ENCODE measurements at regions of chr10 and their contacts with region 1.

Region 1: DNA sequence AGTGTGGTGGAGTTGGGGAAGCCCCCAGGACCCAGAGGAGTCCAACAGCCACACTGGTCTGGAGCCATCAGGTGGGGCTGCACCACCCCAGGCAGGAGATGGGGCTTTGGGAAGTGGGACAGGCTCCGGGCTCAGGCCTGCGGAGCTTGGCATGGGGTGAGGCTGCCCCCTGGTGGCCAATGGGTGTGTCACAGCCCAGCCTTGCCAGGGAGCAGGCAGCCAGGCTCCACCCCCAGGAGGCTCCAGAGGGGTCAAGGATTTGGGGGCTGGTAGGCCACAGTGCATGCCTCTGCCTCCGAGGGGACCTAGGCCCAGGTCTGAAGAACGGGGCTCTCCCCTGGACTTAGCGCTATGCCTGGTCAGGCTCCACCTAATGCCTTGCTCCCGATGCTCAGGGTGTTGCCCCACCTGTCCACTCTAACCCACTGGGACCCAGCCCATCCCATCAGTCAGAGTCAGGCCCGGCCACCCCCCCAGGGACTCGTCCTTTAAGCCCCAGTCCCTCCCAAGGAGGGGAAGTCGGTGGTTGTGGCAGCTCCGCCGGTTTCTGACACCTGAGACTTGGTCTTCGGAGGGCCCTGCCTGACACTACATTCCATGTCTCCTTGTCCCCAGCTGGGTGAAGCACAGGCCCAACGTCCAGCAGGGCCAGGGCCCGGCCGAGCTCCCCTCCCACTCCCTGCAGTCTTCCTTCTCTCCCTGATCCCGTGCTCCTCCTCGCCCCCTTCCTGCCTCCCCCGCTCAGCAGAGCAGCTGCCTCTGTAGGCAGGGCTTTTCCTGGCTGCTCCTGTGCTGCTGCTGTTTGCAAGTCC is 11.3 kb upstream of the SAMD8 start:
- DNase-seq: peak; percentile 90
- CTCF ChIP-seq: peak; percentile 99

Region 2: DNA sequence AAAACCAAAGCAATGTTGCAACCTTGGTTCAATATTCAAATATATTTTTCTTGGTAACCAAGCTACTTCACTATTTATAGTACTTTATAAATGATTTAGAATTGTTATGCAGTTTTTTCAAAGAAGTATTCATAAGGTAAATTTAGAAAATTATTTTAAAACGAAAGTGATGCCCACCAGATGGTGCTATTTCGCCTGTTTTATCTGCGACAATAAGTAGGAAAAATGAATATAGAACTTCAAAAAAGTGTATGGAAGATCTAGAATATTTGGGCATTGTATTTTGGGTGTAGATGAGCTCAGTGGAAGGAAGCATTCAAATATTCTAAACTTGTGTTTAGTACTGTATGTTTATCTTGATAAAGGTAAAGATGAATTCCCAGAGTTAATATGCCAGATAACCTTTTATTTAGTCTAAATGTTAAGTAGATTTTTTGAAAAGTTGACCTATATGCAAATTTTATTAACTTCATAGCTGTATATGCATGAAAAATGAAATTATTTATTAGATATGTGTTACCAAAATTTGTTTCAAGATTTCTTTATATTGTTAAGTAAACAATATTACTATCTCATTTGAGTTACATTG is 856.0 kb before region 1 on chr10:
- CTCF ChIA-PET with region 1: interaction called, 53 read pairs
- POLR2A ChIA-PET with region 1: no interaction called
- DNase-seq: no peak
- CTCF ChIP-seq: peak; percentile 30

Region 3: GRCh38 chr10:74332398-74332797 is 767.8 kb before region 1 on chr10:
- CTCF ChIA-PET with region 1: no interaction called
- POLR2A ChIA-PET with region 1: no interaction called
- DNase-seq: no peak
- CTCF ChIP-seq: no peak

Region 4: DNA sequence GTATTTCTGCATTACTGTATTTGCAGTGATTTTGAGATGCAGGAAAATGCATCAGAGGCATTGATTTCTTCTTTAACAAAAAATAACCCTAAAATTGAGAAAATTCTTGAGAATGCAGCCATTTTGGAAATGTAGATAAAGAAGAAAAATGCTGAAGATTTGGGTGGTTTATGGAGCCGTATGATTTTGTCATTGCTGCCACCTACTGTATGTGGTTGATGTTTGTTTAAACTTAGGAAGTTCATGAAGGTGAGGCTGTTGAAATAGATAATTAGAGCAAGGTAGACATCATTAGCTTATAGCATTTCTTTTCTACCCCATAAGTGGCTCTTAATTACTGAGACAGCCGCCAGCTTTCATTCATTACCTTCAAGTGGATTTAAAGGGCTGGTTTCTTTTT is 80.8 kb before region 1 on chr10:
- CTCF ChIA-PET with region 1: interaction called, 11 read pairs
- POLR2A ChIA-PET with region 1: no interaction called
- DNase-seq: no peak
- CTCF ChIP-seq: peak; percentile 37

Region 5: DNA sequence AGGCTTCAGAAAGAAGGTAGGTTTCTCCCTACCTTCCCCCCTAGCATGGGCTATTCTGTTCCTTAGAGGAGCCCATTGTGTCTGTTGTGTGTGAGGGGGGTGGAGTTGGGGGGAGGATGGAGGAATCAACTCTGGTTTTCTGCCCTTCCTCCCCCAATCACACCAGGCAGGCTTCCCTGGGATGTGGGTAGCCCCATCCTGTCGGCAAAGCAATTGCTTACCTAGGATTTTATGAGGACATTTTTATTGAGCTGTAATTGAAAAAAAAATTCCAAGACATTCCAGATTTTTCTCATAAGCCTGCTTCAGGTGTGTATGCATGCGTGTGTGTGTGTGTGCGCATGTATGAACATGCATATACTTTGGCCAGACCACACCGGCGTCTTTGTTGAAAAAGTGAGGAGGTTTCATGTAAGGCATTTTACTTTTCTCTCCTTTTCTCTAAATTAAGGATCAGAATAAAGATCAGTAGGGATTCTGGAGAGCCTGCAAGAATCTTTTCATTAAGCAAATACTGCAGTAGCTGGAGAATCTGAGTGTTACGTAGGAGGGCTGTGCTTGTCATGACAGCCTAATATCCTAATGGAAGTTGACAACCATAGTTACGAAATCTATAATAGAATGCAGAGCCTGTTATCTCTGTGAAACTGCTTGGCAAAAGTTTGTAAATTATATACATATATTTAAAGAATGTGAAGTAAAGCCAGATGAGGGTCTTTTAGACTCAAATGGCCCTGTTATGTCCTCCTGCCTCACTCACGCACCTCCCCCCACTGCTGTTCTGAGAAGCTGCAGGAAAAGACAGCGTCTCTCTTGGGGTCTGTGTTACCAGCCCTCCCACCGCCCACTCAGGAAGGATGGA is 16.0 kb before region 1 on chr10:
- CTCF ChIA-PET with region 1: interaction called, 14 read pairs
- POLR2A ChIA-PET with region 1: no interaction called
- DNase-seq: no peak
- CTCF ChIP-seq: no peak

Region 6: GRCh38 chr10:75111367-75111906 is 11.3 kb after region 1 on chr10 and contains the start of gene SAMD8:
- CTCF ChIA-PET with region 1: interaction called, 22 read pairs
- POLR2A ChIA-PET with region 1: no interaction called
- DNase-seq: peak; percentile 100
- CTCF ChIP-seq: peak; percentile 0

Region 7: GRCh38 chr10:75202321-75203045 is 102.3 kb after region 1 on chr10:
- CTCF ChIA-PET with region 1: no interaction called
- POLR2A ChIA-PET with region 1: no interaction called
- DNase-seq: no peak
- CTCF ChIP-seq: no peak

Region 8: DNA sequence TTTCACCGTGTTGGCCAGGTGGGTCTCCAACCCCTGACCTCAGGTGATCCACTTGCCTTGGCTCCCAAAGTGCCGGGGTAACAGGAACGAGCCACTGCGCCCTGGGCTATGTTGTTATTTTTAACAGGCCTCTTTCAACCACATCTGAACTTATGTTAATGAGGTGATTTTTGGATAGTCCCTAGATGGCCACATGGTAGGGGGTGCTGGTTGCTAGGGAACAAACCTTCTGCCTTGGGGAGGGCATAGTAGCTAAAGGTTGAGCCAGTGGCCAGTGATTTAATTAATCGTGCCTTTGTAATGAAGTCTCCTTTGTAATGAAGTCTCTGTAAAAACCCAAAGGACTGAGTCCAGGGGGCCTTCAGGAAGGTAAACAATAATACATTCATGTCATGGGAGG is 126.5 kb after region 1 on chr10:
- CTCF ChIA-PET with region 1: no interaction called
- POLR2A ChIA-PET with region 1: no interaction called
- DNase-seq: no peak
- CTCF ChIP-seq: no peak

Measured in GM10248 (cell line).